Brain microvascular endothelial cell (primary cell): ENCODE measurements at regions of chr17 and their contacts with region 1.

Region 1: GRCh38 chr17:77465358-77466041 is 324.7 kb downstream of the SEC14L1 start:
- DNase-seq: peak; percentile 60
- H3K4me3 ChIP-seq: no peak overlapping the region
- H3K27ac ChIP-seq: peak overlapping the region; percentile 60
- H3K27me3 ChIP-seq: no peaks in the 10 kb centered on the region
- CTCF ChIP-seq: no peak

Region 2: DNA sequence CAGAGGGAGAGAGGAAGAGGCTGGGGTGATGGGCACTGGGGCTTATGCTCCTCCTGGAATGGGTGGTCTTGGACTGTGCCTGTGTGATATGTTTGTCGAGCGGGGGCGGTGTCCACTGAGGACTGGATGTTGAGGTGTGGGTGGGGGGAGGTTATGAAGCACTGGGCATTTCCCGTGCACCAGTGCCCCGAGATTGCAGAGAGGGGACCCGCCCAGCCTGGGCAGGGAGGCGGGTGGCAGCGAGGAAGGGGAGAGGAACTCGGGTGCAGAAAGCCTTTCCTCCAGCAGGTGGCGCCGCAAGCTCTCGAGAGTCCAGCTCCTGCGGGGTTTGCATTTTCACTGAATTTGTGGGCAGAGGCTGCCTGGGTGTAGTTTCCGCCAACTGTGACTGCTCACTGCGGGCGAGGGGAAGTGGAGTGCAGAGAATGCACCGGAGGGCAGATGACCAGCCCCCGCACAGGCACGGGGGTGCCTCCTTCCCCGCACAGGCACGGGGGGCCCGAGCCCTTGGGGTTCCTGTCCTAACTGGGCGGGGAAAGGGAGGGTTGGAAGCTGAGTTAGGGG is 134.1 kb before region 1 on chr17:
- in situ Hi-C with region 1: loop called (anchors 25 kb)
- DNase-seq: peak; percentile 82
- H3K4me3 ChIP-seq: no peak overlapping the region
- H3K27ac ChIP-seq: no peak overlapping the region
- H3K27me3 ChIP-seq: no peaks in the 10 kb centered on the region
- CTCF ChIP-seq: peak; percentile 93